Panc1 (cell line): ENCODE measurements at regions of chr3 and their contacts with region 1.

Region 1: DNA sequence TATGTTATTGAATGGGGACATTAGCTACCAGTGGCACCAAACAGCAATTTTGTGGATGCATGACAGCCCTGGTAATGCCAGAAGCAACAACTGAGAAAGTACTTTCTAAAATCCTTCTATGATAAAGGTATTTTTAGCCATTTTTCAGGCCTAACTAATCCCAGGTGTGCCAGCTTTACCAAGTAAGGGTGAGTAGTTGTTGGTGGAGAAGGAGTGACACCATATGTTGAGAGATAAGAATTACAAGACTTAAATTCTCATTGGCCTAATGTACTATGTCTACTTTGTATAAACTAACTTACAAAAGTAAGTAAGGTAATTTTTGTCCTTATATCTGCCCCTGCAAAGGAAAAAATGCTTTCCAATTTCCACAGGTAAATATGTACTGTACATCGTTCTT is 4.1 kb upstream of the COX17 start:
- DNase-seq: peak; percentile 22
- ATAC-seq: no peak
- H3K4me3 ChIP-seq: no peak overlapping the region
- H3K27ac ChIP-seq: no peak overlapping the region
- H3K4me1 ChIP-seq: peaks cover 5% of the 10 kb centered on the region
- H3K27me3 ChIP-seq: no peaks in the 10 kb centered on the region; the same call in 1 of the 2 replicates
- CTCF ChIP-seq: peak; percentile 69; the same call in 1 of the 2 replicates

Region 2: GRCh38 chr3:118884748-118885206 is 796.5 kb before region 1 on chr3:
- CTCF ChIA-PET with region 1: no interaction called
- POLR2A ChIA-PET with region 1: no interaction called
- in situ Hi-C with region 1: no loop called
- intact Hi-C with region 1: loop called (anchors 2 kb)
- DNase-seq: peak; percentile 43
- ATAC-seq: peak; percentile 92
- H3K4me3 ChIP-seq: no peak overlapping the region
- H3K27ac ChIP-seq: no peak overlapping the region
- H3K4me1 ChIP-seq: no peaks in the 10 kb centered on the region
- H3K27me3 ChIP-seq: peaks cover 20% of the 10 kb centered on the region
- CTCF ChIP-seq: peak; percentile 98

Region 3: GRCh38 chr3:119104031-119104430 is 577.2 kb before region 1 on chr3:
- CTCF ChIA-PET with region 1: no interaction called
- POLR2A ChIA-PET with region 1: no interaction called
- in situ Hi-C with region 1: no loop called
- intact Hi-C with region 1: loop called (anchors 5 kb)
- DNase-seq: no peak
- ATAC-seq: no peak
- H3K4me3 ChIP-seq: no peak overlapping the region
- H3K27ac ChIP-seq: no peak overlapping the region
- H3K4me1 ChIP-seq: no peaks in the 10 kb centered on the region
- H3K27me3 ChIP-seq: no peaks in the 10 kb centered on the region; the same call in 1 of the 2 replicates
- CTCF ChIP-seq: no peak

Region 4: GRCh38 chr3:119279101-119279554 is 402.2 kb before region 1 on chr3:
- CTCF ChIA-PET with region 1: no interaction called
- POLR2A ChIA-PET with region 1: no interaction called
- in situ Hi-C with region 1: no loop called
- intact Hi-C with region 1: loop called (anchors 10 kb)
- DNase-seq: no peak
- ATAC-seq: peak; percentile 62; the same call in 1 of the 2 replicates
- H3K4me3 ChIP-seq: no peak overlapping the region
- H3K27ac ChIP-seq: no peak overlapping the region
- H3K4me1 ChIP-seq: no peaks in the 10 kb centered on the region
- H3K27me3 ChIP-seq: no peaks in the 10 kb centered on the region
- CTCF ChIP-seq: no peak

Region 5: DNA sequence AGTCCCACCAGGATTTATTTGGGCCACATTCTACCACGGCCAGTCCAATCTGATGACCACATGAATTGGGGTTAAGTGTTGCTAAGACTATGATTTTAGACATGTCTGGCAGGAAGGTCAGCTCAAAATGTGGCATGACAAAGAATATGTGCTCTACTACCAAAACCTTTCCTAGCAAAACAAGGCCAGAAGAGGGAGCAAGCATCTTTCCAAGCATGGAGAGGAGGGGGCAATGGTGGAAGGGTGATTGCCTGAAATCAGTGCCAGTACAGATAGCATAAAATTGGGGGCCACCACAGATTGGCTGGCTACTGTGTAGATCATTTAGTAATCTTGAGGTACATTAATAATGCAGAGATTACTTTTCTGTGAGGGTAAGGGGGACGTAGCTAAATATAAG is 261.1 kb before region 1 on chr3:
- CTCF ChIA-PET with region 1: no interaction called
- POLR2A ChIA-PET with region 1: no interaction called
- in situ Hi-C with region 1: no loop called
- intact Hi-C with region 1: loop called (anchors 5 kb)
- DNase-seq: no peak
- ATAC-seq: no peak
- H3K4me3 ChIP-seq: no peak overlapping the region
- H3K27ac ChIP-seq: no peak overlapping the region
- H3K4me1 ChIP-seq: no peaks in the 10 kb centered on the region
- H3K27me3 ChIP-seq: no peaks in the 10 kb centered on the region
- CTCF ChIP-seq: peak; percentile 44

Region 6: DNA sequence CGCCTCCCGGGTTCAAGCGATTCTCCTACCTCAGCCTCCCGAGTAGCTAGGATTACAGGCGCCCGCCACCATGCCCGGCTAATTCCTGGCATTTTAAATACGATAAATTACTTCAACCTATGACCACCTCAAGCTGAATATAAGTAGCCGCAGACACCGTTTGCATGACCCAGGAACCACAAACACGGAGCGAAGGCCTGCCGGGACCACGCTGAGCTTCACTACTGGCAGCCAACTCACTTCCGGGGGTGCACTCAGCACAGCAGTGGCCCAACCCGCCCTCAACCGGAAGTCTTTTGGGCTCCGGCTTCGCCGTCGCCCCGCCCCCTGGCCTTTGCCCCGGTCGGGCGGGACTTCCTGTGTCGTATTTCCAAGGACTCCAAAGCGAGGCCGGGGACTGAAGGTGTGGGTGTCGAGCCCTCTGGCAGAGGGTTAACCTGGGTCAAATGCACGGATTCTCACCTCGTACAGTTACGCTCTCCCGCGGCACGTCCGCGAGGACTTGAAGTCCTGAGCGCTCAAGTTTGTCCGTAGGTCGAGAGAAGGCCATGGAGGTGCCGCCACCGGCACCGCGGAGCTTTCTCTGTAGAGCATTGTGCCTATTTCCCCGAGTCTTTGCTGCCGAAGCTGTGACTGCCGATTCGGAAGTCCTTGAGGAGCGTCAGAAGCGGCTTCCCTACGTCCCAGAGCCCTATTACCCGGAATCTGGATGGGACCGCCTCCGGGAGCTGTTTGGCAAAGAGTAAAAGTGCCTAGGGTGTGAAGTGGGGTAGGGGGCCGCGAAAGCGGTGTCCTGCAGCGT is 182.9 kb before region 1 on chr3 and contains the start of gene TIMMDC1:
- CTCF ChIA-PET with region 1: no interaction called
- POLR2A ChIA-PET with region 1: no interaction called
- in situ Hi-C with region 1: no loop called
- intact Hi-C with region 1: loop called (anchors 10 kb)
- DNase-seq: peak; percentile 90
- ATAC-seq: peak; percentile 99
- H3K4me3 ChIP-seq: peak within 1 kb of the TSS; percentile 80 to 99
- H3K27ac ChIP-seq: peak within 1 kb of the TSS; percentile 97
- H3K4me1 ChIP-seq: peaks cover 15% of the 10 kb centered on the region
- H3K27me3 ChIP-seq: no peaks in the 10 kb centered on the region
- CTCF ChIP-seq: no peak
- total RNA-seq, gene TIMMDC1: 170 TPM

Region 7: DNA sequence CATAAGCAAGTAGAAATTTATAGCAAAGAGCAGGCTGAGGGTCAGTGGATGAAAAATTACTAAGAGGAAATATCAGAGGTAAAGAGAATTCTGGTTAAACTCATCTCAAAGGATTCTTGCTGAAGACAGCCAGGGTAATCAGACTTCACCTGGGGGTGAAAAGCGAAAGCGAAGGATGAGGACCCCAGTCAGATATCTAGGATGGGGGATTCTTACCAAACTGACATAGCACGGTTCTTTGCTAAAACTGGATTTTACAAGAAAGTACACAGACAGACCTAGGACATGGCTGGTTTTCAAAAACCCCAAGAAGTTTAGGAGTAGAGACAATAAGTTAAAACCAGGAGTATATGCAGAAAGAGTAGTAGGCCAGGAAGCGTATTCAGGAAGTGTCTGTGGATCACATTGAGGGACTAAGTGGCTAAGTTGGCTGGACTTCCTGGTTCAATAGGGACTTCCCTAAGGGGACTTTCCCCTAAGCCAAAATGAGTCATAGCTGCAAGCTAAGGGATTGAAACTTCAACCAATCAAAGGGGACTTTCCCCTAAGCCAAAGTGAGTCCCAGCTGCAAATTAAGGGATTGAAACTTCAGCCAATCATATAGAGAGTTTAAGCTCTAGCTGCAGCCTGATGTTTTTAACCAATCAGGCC is 19.1 kb after region 1 on chr3:
- CTCF ChIA-PET with region 1: no interaction called
- POLR2A ChIA-PET with region 1: no interaction called
- in situ Hi-C with region 1: no loop called
- intact Hi-C with region 1: loop called (anchors 1 kb)
- DNase-seq: no peak
- ATAC-seq: no peak
- H3K4me3 ChIP-seq: no peak overlapping the region
- H3K27ac ChIP-seq: no peak overlapping the region
- H3K4me1 ChIP-seq: peaks cover 5% of the 10 kb centered on the region; the same call in 1 of the 2 replicates
- H3K27me3 ChIP-seq: 0 out of 2 replicates have a peak, but pooled peaks cover 3% of the 10 kb centered on the region
- CTCF ChIP-seq: no peak